Activated CD4-positive, alpha-beta memory T cell treated with anti-CD3 and anti-CD28 coated beads for 36 hours (primary cell): ENCODE measurements at regions of chr7 and their contacts with region 1.

Region 1: GRCh38 chr7:101058355-101058754 is 26.9 kb upstream of the TRIM56 start:
- DNase-seq: peak; percentile 63
- H3K4me3 Mint-ChIP-seq: no peak overlapping the region
- H3K27ac Mint-ChIP-seq: no peak overlapping the region
- H3K4me1 Mint-ChIP-seq: peaks cover 3% of the 10 kb centered on the region
- H3K27me3 Mint-ChIP-seq: peaks cover 36% of the 10 kb centered on the region

Region 2: DNA sequence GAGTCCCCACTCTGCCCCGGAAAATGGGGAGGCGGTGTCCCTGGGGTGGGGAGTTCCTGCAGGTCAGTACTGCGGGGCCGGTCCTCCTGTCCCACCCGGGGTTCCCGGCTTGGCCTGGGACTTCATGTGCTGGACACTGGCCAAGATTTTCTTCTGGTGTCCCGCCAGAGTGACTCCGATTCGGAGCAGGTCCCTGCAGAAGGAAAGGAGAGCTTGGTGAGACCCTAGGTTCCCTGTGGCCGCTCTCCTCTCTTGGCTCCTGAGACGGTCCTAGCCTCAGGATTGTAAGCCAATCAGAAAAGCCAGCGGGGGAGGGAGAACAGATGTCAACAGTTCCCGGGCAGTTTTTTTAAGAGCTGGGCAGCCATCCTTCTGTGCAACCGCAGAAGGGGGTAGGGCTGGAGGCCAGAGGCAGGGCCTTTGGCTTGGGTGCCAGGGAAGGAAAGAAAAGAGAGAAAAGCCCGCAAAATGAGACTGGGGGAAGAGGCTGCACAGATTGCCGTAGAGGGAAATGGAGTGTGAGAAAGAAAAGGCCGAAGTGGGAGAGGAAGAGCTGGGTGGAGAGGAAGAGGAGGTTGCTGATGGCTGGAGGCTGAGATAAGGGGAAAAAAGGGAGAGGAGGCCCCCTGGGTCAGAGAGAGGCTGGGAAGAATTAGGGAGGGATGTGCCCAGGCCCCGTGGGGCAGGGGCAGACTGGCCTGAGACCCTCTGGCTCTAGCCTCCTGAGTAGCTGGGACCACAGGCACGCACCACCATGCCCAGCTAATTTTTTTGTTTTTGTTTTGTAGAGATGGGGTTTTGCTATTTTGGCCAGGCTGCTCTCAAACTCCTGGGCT is 254.7 kb before region 1 on chr7:
- CTCF ChIA-PET with region 1: interaction called, 4 read pairs
- POLR2A ChIA-PET with region 1: no interaction called
- intact Hi-C with region 1: loop called (anchors 5 kb)
- DNase-seq: peak; percentile 67
- H3K4me3 Mint-ChIP-seq: no peak overlapping the region
- H3K27ac Mint-ChIP-seq: no peak overlapping the region
- H3K4me1 Mint-ChIP-seq: peaks cover 2% of the 10 kb centered on the region
- H3K27me3 Mint-ChIP-seq: peaks cover 3% of the 10 kb centered on the region

Region 3: GRCh38 chr7:100896732-100897608 is 161.4 kb before region 1 on chr7:
- CTCF ChIA-PET with region 1: interaction called, 37 read pairs
- POLR2A ChIA-PET with region 1: no interaction called
- intact Hi-C with region 1: loop called (anchors 2 kb)
- DNase-seq: peak; percentile 62
- H3K4me3 Mint-ChIP-seq: peak overlapping the region; percentile 26
- H3K27ac Mint-ChIP-seq: no peak overlapping the region
- H3K4me1 Mint-ChIP-seq: peaks cover 7% of the 10 kb centered on the region
- H3K27me3 Mint-ChIP-seq: peaks cover 39% of the 10 kb centered on the region

Region 4: DNA sequence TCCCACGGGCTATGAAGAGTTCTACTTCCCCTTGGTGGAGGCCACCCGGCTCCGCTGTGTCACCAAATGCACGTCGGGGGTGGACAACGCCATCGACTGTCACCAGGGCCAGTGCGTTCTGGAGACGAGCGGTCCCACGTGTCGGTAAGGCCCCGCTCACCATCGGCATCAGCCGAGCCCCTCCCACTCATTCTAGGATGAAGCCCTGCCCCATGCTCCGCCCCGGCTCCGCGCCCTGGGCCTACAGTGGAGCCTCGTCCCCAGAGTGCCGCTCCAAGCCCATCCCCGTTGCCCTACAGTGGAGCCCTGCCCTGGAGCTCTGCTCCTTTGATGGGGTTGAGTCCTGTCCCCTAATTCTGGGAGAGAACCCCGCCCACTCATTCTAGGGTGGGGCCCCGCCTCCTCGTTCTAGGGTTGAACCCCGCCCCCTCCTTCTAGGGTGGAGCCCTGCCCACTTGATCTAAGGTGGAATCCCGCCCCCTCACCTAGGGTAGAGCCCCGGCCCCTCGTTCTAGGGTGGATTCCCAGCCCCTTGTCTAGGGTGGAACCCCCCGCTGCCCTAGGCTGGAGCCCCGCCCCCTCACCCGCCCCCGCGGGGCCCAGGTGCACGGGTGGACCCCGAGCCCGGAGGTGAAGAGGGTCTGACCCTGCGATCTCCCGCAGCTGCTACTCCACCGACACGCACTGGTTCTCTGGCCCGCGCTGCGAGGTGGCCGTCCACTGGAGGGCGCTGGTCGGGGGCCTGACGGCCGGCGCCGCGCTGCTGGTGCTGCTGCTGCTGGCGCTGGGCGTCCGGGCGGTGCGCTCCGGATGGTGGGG is 92.4 kb before region 1 on chr7:
- CTCF ChIA-PET with region 1: interaction called, 5 read pairs
- POLR2A ChIA-PET with region 1: no interaction called
- intact Hi-C with region 1: loop called (anchors 1 kb)
- DNase-seq: peak; percentile 90
- H3K4me3 Mint-ChIP-seq: peak overlapping the region; percentile 43
- H3K27ac Mint-ChIP-seq: no peak overlapping the region
- H3K4me1 Mint-ChIP-seq: peaks cover 15% of the 10 kb centered on the region
- H3K27me3 Mint-ChIP-seq: peaks cover 45% of the 10 kb centered on the region

Region 5: DNA sequence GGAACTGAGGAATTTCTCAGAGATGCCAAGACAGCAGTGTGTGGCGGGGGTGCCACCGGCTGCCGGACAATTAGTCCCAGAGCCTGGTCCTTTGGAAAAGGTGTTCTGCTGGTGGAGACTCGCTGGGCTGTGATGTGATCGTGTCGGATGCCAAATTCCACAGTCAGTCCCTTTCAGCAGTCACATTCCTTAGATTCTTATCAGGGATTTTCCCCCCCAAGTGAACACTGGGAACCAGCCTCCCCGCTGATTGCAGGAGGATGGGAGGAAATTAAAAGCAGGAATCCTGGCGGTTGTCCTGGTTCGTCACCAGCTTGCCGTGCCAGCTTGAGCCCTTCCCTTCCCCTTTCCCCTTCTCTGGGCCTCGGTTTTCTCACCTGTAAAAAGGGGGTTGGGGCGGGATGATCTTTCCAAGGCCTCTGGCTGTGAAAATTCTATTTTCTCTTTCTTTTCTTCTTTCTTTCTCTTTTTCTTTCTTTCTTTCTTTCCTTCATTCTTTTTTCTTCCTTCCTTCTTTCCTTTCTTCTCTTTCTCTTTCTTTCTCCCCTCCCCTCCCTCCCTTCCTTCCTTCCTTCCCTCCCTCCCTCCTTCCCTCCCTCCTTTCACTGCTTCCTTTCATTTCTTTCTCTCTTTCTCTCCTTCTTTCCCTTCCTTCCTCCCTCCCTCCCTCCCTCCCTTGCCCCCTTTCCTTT is 343.9 kb after region 1 on chr7:
- CTCF ChIA-PET with region 1: no interaction called
- POLR2A ChIA-PET with region 1: no interaction called
- intact Hi-C with region 1: no loop called
- DNase-seq: no peak
- H3K4me3 Mint-ChIP-seq: no peak overlapping the region
- H3K27ac Mint-ChIP-seq: no peak overlapping the region
- H3K4me1 Mint-ChIP-seq: no peaks in the 10 kb centered on the region
- H3K27me3 Mint-ChIP-seq: peaks cover 14% of the 10 kb centered on the region